Common myeloid progenitor, CD34-positive (primary cell): ENCODE measurements at regions of chr3 and their contacts with region 1.

Region 1: GRCh38 chr3:124905849-124906248 is 18.7 kb upstream of the ITGB5 start:
- DNase-seq: no peak
- H3K4me3 ChIP-seq: no peak overlapping the region
- H3K27ac ChIP-seq: no peak overlapping the region
- H3K4me1 ChIP-seq: no peaks in the 10 kb centered on the region
- H3K27me3 ChIP-seq: peaks cover 0 to 4% (median 0%) of the 10 kb centered on the region in 5 experiments

Region 2: GRCh38 chr3:124761250-124761796 is 144.5 kb before region 1 on chr3:
- CTCF ChIA-PET with region 1: interaction called, 148 read pairs
- POLR2A ChIA-PET with region 1: interaction called, 5 read pairs
- DNase-seq: peak; percentile 77 to 89 (median 82)
- H3K4me3 ChIP-seq: no peak overlapping the region
- H3K27ac ChIP-seq: no peak overlapping the region
- H3K4me1 ChIP-seq: peaks cover 0 to 11% (median 7%) of the 10 kb centered on the region in 4 experiments
- H3K27me3 ChIP-seq: no peaks in the 10 kb centered on the region

Region 3: DNA sequence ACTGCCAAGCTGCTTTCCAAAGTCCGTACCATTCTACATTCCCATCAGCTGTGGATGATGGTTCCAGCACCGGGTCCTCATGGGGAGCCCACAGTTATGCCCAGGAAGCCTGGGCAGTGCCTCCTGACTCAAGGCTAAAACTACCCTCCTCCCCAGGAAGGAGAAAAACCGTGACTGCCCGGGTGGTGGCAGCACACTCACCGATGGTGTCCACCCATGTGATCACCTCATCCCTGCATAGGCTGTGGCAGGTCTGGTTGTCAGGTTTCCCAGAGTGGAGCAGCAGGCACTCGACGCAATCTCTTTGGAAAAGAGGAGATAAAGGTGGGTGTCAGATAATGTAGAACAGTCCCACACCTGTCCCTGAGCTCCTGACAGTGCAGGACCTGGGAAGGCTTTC is 137.0 kb before region 1 on chr3:
- CTCF ChIA-PET with region 1: interaction called, 148 read pairs
- POLR2A ChIA-PET with region 1: no interaction called
- DNase-seq: peak in 2 of 3 donors; percentile 52 to 55
- H3K4me3 ChIP-seq: no peak overlapping the region
- H3K27ac ChIP-seq: no peak overlapping the region
- H3K4me1 ChIP-seq: peaks cover 3 to 21% (median 11%) of the 10 kb centered on the region in 4 experiments
- H3K27me3 ChIP-seq: peaks cover 0 to 2% (median 1%) of the 10 kb centered on the region in 5 experiments

Region 4: DNA sequence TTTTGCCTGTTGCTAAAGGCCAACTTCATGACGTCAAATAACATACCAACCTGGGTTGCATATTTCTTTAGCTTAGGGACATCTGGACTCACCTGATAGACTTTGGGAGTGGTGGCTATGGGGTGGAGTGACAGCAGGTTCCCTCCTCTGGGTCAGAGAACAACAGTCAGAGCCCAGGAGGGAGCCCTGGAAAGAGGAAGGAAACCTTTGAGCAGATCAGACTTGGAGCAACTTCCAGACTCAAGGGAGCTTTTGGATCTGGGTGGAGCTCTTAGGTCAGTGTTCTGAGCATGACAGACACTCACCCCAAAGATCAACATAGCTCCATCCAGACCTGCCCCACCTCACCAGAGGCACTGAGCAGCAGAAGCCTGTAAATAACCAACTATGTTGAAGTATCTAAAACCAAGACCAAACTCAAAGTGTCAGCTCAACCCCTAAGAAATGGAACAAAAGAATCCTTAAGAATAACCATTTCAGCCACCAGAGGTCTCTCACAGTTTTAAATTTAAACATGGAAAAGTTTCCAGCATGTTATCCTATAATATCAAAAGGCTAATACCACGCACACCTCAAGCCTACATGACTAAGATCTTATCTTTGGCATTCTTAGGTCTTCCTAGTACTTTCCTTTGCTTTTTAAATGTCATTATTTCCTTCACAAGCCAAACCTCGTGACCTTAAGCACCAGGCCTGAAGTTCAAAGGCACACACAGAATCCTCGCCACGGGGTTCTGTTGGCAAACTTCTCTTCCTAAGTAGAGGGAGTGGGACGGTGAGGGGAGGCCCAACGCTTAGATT is 119.2 kb before region 1 on chr3:
- CTCF ChIA-PET with region 1: interaction called, 28 read pairs
- POLR2A ChIA-PET with region 1: no interaction called
- DNase-seq: no peak
- H3K4me3 ChIP-seq: no peak overlapping the region
- H3K27ac ChIP-seq: no peak overlapping the region
- H3K4me1 ChIP-seq: peaks cover 0 to 42% (median 29%) of the 10 kb centered on the region in 4 experiments
- H3K27me3 ChIP-seq: peaks cover 0 to 2% (median 0%) of the 10 kb centered on the region in 5 experiments

Region 5: GRCh38 chr3:124890282-124891190 is 15.3 kb before region 1 on chr3:
- CTCF ChIA-PET with region 1: interaction called, 26 read pairs
- POLR2A ChIA-PET with region 1: no interaction called
- DNase-seq: no peak
- H3K4me3 ChIP-seq: no peak overlapping the region
- H3K27ac ChIP-seq: no peak overlapping the region
- H3K4me1 ChIP-seq: peaks cover 0 to 20% (median 18%) of the 10 kb centered on the region in 4 experiments
- H3K27me3 ChIP-seq: peaks cover 10 to 42% (median 14%) of the 10 kb centered on the region in 5 experiments